GM10248 (cell line): ENCODE measurements at regions of chr10 and their contacts with region 1.

Region 1: DNA sequence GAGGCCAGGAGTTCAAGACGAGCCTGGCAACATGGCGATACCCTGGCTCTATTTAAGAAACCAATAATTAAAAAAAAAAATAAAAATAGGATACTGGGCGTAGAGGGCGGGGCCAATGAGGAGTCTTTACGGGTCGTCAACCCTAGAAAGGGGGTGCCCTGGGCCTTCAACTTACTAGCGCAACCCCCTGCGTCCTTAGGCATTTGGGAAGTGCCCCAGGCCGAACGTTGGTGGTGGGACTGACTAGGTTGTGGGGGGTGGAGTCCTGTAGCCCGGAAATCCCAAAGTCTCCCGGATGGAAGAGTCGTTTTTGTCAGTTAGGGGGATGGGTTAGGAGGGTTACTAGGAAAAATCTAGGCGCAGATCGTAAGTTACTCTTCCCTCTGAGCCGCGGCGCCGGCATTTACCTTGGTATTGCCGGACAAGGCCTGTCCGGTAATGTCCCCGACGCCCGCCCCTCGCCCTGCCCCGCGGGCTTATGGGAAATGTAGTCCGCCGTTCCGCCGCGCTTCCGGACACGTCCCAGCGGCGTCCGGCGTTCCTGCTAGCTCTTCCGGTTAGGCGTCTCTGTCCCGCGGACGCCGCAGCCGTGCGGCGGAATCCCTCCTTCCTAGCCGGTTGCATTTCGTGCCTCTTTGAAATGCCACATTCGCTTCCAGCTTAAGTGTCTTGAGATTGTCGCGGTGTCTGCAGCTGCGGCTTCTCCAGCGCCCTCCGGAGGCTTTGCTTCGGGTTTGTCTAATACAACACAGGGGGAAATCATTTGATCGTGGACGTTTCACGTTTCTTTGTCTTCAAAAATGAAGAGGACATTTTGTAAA is 1.3 kb upstream of the ACBD5 start:
- DNase-seq: peak; percentile 88
- CTCF ChIP-seq: peak; percentile 16

Region 2: GRCh38 chr10:27252267-27253000 is 10.6 kb after region 1 on chr10:
- CTCF ChIA-PET with region 1: interaction called, 19 read pairs
- POLR2A ChIA-PET with region 1: interaction called, 4 read pairs
- DNase-seq: peak; percentile 85
- CTCF ChIP-seq: peak; percentile 25

Region 3: DNA sequence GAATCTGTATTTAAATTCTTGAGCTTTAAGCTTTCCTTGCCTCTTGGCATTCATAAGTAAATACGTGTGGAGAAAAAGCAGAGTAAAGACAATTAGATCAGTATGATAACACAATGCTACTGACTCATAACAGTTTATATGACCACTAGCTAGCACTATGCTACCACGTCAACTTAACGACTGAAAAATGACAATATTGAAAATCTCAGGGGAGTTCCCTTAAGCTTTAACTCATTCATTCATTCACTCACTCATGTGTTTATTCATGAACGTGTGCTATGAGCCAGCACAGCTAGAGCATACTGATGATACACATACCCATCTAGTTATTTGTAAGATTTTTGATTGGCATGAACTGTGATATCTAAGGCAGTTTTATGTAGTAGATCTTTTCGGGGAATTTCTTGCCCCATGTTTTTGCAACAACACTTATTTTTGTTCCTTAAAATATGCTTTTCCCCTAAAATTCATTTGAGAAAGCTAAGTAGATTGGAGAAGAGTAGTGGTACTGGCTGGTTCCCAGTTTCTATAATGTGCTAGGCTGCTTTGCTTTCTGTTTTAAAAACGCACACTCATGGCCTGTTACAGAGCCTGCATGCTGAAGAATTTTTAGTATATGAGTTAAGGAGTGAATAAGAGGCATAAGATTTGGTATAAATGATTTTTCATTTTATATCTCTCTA is 56.1 kb after region 1 on chr10:
- CTCF ChIA-PET with region 1: no interaction called
- POLR2A ChIA-PET with region 1: no interaction called
- DNase-seq: no peak
- CTCF ChIP-seq: no peak

Region 4: GRCh38 chr10:27319752-27320561 is 78.1 kb after region 1 on chr10:
- CTCF ChIA-PET with region 1: no interaction called
- POLR2A ChIA-PET with region 1: no interaction called
- DNase-seq: peak; percentile 35
- CTCF ChIP-seq: no peak